Posterior vena cava (tissue), 2 donors: ENCODE measurements at regions of chr12 and their contacts with region 1.

Region 1: GRCh38 chr12:121811434-121812319 is 7.9 kb downstream of the SETD1B start:
- DNase-seq: peak; percentile 93

Region 2: DNA sequence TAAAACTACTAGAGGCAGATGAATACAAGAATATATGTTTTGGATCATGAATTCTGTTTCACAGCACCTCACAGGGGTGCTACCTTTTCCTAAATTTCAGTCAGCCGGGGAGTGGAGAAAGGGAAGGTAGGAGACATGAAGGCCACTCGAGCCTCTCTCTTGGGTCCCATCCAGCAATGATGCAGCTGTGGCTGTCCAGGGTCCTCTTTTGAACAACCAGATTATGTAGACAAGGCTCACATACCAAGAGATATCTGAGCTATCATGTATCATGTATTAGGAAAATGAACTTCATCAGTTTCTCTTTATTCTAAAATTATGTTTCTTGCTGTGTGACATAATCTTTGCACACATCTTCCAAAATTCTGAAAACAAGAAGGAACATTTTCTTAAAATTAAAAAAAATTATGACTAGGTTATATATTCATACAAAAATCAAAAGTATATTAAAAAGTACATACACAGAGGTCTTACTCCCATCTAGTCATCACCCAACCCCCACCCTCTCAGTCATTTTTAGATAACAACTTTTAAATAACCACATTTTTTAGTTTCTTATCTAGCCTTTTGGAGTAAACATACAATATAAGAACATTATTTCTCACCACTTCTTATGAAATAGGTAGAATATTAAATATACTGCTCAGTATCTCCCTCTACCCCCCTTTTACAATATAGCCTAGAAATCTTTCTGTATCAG is 997.3 kb before region 1 on chr12:
- intact Hi-C with region 1: no loop called
- DNase-seq: no peak

Region 3: GRCh38 chr12:121712461-121713256 is 99.0 kb before region 1 on chr12 and contains the start of gene TMEM120B:
- intact Hi-C with region 1: no loop called
- DNase-seq: peak; percentile 95
- total RNA-seq, gene TMEM120B: 7.9 to 11.0 TPM

Region 4: GRCh38 chr12:121773011-121773777 is 38.5 kb before region 1 on chr12:
- intact Hi-C with region 1: loop called in 1 of 2 experiments (anchors 5 kb)
- DNase-seq: peak; percentile 88

Region 5: DNA sequence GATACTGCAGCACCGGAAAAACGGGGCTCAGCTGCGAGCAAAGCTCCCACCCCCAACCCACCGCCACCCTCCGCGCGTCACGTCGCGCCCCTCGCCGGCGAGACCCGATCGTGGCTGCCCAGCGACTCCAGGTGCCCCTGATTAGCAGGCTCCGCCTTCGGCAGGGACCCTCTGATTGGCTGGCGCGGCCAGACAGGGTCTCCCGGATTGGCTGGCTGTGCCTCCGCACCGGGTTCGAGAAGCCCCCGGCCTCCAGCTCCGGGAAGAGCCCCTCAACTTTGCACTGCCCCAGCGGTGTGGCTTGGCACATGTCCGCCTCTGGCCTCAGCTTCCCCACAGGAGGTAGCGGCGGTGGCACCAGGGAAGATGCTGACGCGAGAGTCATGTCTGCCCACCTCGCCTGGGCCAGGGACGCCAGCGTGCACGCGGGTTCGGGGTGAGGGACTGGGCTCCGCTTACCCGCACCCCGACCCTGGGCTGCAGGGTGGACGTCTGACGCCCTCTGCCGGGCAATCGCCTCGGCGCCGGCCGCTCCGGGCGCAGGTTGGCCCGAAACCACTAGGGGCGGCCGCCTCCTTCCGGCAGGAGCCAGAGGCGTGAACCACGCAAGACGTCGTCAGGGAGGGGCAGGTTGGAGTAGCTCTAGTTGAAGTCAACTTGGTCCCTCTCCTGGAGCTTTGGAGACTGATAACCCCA is 17.7 kb before region 1 on chr12:
- intact Hi-C with region 1: loop called in 1 of 2 experiments (anchors 2 kb)
- DNase-seq: peak; percentile 98